PC-9 (cell line): ENCODE measurements at regions of chr6 and their contacts with region 1.

Region 1: DNA sequence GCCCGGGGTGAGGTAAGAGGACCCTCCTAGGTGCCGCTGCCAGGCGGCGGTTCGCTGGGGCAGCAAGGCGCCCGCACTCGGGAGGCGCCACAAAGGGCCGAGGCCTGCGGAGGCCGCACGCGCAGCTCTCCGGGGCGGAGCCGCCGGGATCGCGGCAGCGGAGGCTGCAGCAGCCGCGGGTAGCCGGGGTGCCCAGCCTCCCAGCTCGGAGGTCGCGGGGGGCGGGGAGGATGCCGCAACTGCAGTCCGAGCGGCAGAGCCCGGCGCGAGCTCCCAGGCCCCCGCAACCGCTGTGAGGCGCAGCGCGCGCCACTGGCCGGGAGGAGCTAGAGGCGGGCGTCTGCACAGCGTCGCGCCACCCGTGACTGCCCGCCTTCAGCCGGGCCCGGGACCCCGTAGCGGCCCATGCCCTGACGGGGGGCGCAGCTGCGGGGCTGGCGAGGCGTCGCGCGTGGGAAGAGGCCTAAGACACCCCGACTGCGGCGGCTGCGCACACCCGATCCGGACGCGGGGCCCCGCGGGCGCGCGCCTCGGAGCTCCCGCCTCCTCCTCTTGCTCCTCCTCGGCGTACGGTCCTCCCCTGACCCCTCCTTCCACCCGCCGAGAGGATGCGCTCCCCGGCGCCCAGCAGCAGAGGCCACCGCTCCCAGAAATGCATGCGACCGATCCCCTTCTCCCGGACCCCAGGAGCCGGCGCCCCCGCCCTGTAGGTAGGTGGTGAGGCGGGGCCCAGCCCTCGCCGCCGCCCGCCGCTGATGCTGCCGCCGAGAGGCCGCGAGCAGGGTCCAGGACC is at the start of gene NCOA7:
- DNase-seq: peak; percentile 50 to 78
- H3K4me3 ChIP-seq: peak within 1 kb of the TSS; percentile 75
- H3K27ac ChIP-seq: peak within 1 kb of the TSS; percentile 48
- H3K4me1 ChIP-seq: peaks cover 53% of the 10 kb centered on the region
- H3K27me3 ChIP-seq: no peaks in the 10 kb centered on the region
- CTCF ChIP-seq: no peak
- total RNA-seq, gene NCOA7: 47.6 and 51.0 TPM in 2 replicates

Region 2: DNA sequence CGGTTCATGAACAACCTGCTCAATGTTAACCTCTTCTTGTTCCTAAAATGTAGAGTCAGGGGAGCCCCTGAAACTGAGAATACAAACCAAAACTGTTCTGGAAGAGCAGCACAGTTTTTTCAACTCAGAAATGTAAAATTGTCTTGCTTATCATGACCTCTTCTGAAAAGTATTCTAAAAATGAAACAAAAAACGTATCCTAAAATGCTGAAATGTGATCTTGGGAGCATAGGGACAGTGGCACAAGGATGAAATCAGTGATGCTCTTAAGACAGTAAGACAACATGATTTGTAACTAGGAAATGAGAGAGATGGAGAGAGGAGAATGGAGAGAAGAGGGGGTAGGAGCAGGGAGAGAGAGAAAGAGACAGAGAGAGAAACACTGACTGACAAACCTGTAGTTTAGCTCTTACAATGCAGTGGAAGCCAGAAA is 27.7 kb after region 1 on chr6:
- CTCF ChIA-PET with region 1: interaction called, 5 read pairs
- POLR2A ChIA-PET with region 1: interaction called, 3 read pairs
- intact Hi-C with region 1: loop called (anchors 2 kb)
- DNase-seq: no peak
- H3K4me3 ChIP-seq: peak overlapping the region; percentile 28; the same call in 1 of the 2 replicates
- H3K27ac ChIP-seq: peak overlapping the region; percentile 85
- H3K4me1 ChIP-seq: peaks cover 67% of the 10 kb centered on the region
- H3K27me3 ChIP-seq: no peaks in the 10 kb centered on the region
- CTCF ChIP-seq: no peak

Region 3: GRCh38 chr6:125846292-125847024 is 55.9 kb after region 1 on chr6:
- CTCF ChIA-PET with region 1: no interaction called
- POLR2A ChIA-PET with region 1: no interaction called
- intact Hi-C with region 1: no loop called
- DNase-seq: no peak
- H3K4me3 ChIP-seq: no peak overlapping the region
- H3K27ac ChIP-seq: no peak overlapping the region
- H3K4me1 ChIP-seq: no peaks in the 10 kb centered on the region
- H3K27me3 ChIP-seq: no peaks in the 10 kb centered on the region
- CTCF ChIP-seq: no peak

Region 4: DNA sequence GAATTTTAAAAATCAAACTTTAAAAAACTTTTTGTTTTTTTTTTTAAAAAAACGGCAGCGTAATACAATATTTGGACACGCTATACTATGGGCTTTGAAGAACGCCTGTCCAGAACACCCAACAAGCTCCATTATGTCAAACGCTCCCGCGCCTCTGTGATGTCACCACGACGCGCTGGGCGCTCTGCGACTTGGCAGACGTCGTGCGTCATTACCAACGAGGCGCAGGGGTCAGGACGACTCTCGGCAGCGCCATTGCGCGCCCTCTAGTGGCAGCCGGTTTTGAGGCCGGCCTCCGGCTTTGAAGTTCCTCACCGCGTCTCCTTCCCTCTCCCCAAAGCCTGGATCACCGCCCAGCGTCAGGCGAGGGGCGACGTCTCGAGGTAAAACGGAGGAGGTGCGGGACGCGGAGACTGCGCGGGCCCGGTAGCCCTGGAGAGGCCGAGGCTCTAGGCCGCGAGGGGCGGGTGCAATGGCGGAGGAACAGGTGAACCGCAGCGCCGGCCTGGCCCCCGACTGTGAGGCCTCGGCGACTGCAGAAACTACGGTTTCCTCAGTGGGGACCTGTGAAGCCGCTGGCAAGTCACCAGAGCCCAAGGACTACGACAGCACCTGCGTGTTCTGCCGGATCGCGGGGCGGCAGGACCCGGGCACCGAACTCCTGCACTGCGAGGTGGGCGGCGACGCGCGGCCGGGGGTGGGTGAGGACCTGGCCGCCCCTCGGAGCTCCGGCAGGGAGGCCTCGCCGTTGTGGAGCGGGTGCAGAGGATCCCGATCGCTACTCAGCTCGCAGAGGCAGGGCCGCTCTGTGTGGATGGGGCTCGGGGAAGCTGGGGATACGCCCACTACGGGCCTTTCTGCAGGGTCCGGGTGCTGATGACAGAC is 166.2 kb after region 1 on chr6 and contains the start of gene HINT3:
- CTCF ChIA-PET with region 1: interaction called, 14 read pairs
- POLR2A ChIA-PET with region 1: interaction called, 9 read pairs
- intact Hi-C with region 1: loop called (anchors 1 kb)
- DNase-seq: peak; percentile 95 to 97
- H3K4me3 ChIP-seq: peak within 1 kb of the TSS; percentile 92
- H3K27ac ChIP-seq: peak within 1 kb of the TSS; percentile 80
- H3K4me1 ChIP-seq: peaks cover 21% of the 10 kb centered on the region
- H3K27me3 ChIP-seq: no peaks in the 10 kb centered on the region
- CTCF ChIP-seq: peak; percentile 99
- total RNA-seq, gene HINT3: 13.6 and 14.4 TPM in 2 replicates